Colonic mucosa (tissue), 4 donors: ENCODE measurements at regions of chr4 and their contacts with region 1.

Region 1: GRCh38 chr4:53633608-53634007 is 42.3 kb upstream of the LNX1 start:
- DNase-seq: no peak
- H3K4me3 ChIP-seq: no peak overlapping the region
- H3K27ac ChIP-seq: no peak overlapping the region
- H3K4me1 ChIP-seq: no peaks in the 10 kb centered on the region
- H3K27me3 ChIP-seq: no peaks in the 10 kb centered on the region
- CTCF ChIP-seq: no peak

Region 2: DNA sequence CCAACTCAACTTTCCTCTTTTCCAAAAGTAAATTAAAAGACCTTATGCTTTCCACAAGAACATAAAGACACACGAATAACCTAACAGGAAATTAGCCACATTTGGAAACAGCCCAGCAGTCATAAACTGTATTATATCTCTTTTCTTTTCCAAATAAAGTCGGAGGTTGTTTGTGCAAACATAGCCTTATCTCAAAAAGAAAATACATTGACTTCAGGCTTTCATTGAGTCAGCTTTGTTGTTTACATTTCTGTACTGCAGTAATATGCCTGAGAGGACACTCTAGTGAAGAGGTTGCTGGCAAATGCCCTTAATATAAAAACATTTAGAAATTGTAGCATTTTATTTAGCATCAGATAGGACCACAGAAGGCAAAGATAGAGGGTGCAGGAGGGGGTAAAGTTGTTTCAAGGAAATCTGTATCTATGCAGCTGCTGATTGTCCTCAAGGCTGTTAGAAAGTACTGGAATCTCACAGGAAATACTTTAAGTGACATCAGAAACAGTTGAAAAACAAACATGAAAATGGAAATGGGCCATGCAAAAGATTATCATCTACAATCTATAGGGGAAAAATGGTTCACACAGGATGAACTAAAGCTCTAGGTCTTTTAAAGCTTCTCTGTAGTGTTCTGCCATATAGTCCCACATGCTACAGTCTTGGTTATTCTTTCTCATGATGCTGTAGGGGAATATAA is 56.8 kb before region 1 on chr4:
- intact Hi-C with region 1: loop called (anchors 10 kb)
- DNase-seq: peak; percentile 57
- H3K4me3 ChIP-seq: no peak overlapping the region
- H3K27ac ChIP-seq: peak overlapping the region; percentile 10
- H3K4me1 ChIP-seq: peaks cover 10% of the 10 kb centered on the region
- H3K27me3 ChIP-seq: no peaks in the 10 kb centered on the region
- CTCF ChIP-seq: no peak

Region 3: GRCh38 chr4:53956053-53956452 is 322.4 kb after region 1 on chr4:
- intact Hi-C with region 1: no loop called
- DNase-seq: no peak
- H3K4me3 ChIP-seq: no peak overlapping the region
- H3K27ac ChIP-seq: no peak overlapping the region
- H3K4me1 ChIP-seq: no peaks in the 10 kb centered on the region
- H3K27me3 ChIP-seq: no peaks in the 10 kb centered on the region
- CTCF ChIP-seq: no peak